ENCODE measurements at regions of chr2 and their contacts with region 1.

Region 1: GRCh38 chr2:170770606-170771420 is 635 bp downstream of the ERICH2 start:
- DNase-seq: peak; percentile 76 to 91
- ATAC-seq: peak; percentile 94
- H3K4me3 ChIP-seq: peak overlapping the region; percentile 28 to 67
- H3K27ac ChIP-seq: peak overlapping the region in 1 of 2 donors; percentile 22
- H3K4me1 ChIP-seq: no peaks in the 10 kb centered on the region
- H3K27me3 ChIP-seq: no peaks in the 10 kb centered on the region

Region 2: DNA sequence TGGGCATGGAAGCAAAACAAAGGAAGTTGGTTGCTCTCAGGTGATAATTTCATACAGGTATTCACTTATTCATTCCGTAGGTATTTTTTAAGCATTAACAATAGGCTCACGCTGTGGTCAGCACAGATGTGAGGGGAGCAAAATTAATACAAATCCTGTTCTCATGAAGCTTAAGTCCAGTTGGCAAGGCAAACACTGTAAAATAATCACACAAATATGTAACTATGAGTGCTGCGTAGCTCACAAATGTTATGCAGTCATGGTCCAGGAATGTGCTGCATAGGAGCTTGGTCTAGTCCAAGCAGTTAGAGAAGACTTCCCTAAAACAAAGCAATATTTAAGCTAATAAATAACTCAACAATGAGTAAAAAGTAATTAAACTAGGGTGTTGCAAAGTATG is 31.8 kb before region 1 on chr2:
- intact Hi-C with region 1: loop called in 1 of 2 experiments (anchors 5 kb)
- DNase-seq: no peak
- ATAC-seq: no peak
- H3K4me3 ChIP-seq: no peak overlapping the region
- H3K27ac ChIP-seq: no peak overlapping the region
- H3K4me1 ChIP-seq: no peaks in the 10 kb centered on the region
- H3K27me3 ChIP-seq: peaks cover 0 to 2% of the 10 kb centered on the region in 2 donors